ENCODE measurements at regions of chr15 and their contacts with region 1.

Region 1: DNA sequence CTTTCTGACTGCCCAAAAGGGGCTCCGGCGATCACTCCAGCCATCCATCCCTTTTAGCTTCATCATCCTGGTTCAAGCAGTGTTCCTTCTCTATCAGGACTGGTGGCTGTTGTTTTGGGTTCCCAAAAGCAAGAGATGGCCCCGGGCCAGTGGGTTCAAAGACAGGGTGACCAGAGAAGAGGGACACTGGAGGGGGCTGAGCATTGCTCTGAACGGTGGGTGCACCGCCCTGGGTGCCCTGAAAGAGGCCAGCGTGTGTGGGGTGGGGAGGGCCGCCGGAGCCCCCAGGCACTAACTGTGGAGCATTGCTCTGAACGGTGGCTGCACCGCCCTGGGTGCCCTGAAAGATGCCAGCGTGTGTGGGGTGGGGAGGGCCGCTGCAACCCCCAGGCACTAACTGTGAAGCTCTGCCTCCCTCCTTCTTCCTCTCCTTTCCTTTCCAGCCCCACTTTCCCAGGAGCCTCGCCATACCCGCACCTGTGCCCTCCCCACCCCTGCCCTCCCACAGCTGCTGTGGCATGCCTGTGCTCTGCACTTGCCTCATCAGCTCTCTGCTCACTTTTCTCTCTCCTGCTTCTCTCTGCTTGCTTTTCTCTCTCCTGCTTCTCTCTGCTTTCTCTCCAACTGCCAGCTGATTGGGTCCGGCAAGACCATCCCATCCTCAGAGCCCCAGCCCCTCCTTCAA is 37.4 kb upstream of the OR4F6 start:
- DNase-seq: no peak
- CTCF ChIP-seq: no peak

Region 2: DNA sequence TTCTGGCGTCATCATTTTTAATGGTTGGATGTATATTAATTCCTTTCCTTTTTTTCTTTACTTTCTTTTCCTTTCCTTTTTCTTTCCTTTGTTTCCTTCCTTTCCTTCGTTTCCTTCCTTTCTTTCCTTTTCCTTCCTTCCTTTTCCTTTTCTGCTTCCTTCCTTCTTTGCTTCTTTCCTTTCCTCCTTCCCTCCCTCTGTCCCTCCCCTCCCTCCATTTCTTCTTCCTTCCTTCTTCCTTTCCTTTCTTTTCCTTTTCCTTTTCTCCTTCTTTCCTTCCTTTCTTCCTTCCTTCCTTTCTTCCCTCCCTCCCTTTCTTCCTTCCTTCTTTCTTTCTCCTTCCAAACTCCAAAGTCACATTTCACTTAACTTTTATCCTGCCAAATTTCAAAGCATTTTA is 1977.7 kb before region 1 on chr15:
- in situ Hi-C with region 1: loop called (anchors 10 kb)
- DNase-seq: no peak
- CTCF ChIP-seq: no peak

Measured in GM13977 (cell line).